PC-3 (cell line): ENCODE measurements at regions of chr15 and their contacts with region 1.

Region 1: GRCh38 chr15:41944313-41944940 is 27.9 kb downstream of the EHD4 start:
- DNase-seq: peak; percentile 97
- ATAC-seq: peak; percentile 76
- H3K4me3 ChIP-seq: peak overlapping the region; percentile 17; the same call in 1 of the 2 replicates
- H3K27ac ChIP-seq: peak overlapping the region; percentile 85
- H3K4me1 ChIP-seq: peaks cover 58% of the 10 kb centered on the region
- H3K27me3 ChIP-seq: no peaks in the 10 kb centered on the region
- CTCF ChIP-seq: no peak

Region 2: GRCh38 chr15:41930221-41930866 is 14.1 kb before region 1 on chr15:
- CTCF ChIA-PET with region 1: no interaction called
- POLR2A ChIA-PET with region 1: interaction called, 7 read pairs
- intact Hi-C with region 1: loop called (anchors 1 kb)
- DNase-seq: peak; percentile 98
- ATAC-seq: peak; percentile 47
- H3K4me3 ChIP-seq: no peak overlapping the region; the same call in 1 of the 2 replicates
- H3K27ac ChIP-seq: peak overlapping the region; percentile 97
- H3K4me1 ChIP-seq: peaks cover 93% of the 10 kb centered on the region
- H3K27me3 ChIP-seq: no peaks in the 10 kb centered on the region
- CTCF ChIP-seq: no peak; the same call in 1 of the 2 replicates

Region 3: DNA sequence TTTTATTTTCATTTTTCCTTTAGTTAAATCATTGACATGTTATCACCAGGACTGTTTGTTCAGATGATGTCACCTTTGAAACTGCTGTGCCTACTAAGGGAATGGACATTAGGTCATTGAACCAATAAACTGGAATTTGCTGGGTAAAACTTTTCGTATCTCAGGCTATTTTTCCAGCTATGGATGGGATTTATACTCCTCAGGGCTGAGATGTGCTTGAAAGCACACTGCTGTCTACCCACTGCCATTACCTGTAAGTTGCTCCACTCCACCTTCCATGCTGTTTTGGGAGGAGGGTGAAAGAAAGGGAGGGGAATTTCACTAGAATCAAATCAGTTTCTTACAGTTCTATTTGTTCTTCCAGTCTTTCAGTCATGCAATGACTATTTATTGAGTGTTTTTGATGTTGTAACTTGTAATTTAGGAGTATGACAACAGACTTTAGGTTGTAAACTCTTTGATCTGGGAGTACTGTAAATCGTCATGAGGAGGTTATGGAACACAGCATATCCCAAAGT is 16.6 kb after region 1 on chr15:
- CTCF ChIA-PET with region 1: interaction called, 3 read pairs
- POLR2A ChIA-PET with region 1: no interaction called
- intact Hi-C with region 1: loop called (anchors 1 kb)
- DNase-seq: peak; percentile 48
- ATAC-seq: peak; percentile 72
- H3K4me3 ChIP-seq: 0 out of 2 replicates have a peak overlapping the region, but pooled peaks have one; percentile 1
- H3K27ac ChIP-seq: peak overlapping the region; percentile 57
- H3K4me1 ChIP-seq: peaks cover 24% of the 10 kb centered on the region
- H3K27me3 ChIP-seq: no peaks in the 10 kb centered on the region
- CTCF ChIP-seq: no peak

Region 4: DNA sequence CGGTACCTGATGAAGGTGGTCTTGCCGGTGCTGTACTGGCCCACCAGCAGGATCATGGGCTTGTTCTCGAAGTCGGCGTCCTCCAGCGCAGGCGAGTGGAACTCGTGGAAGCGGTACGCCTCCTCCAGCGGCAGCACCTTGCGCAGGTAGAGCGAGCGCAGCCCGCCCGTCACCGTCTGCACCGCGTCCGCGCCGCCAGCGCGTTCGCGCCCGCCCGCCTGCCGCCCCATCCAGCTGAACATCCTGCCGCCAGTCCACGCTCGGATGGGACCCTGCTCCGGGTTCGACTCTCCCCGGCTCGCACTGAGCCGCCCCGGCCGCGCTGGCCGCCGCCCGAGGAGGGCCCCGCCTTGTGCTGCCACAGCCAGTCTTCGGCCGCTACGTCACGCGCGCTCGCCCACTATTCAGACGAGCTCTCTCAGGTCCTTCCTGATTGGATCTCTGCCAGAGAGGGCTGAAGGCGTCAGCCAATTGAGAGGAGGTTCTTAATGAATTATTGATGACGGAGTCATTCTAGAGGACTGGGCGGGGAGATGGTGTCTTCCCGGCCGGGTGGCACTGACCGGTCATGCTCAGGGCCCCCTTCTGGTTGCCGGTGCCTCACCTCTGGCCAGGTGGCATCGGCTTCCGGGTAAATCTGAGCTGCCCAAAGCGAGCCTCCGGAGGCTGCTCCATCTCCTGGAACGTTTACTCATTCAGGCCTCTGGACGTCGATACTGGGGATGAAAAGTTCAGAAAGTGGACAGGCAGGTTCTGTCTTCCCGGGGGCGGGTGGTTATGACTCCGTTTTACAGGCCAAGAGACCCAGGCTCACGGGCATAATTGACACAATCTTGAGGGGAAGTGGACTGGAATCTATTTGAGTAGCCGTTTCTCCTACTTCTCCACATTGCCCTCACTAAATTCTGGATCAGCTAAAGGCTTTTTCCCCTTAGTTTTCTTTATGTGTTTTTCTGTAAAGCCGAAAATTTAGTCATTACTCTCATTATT is 28.1 kb after region 1 on chr15 and contains the start of gene EHD4:
- CTCF ChIA-PET with region 1: no interaction called
- POLR2A ChIA-PET with region 1: interaction called, 8 read pairs
- intact Hi-C with region 1: loop called (anchors 1 kb)
- DNase-seq: peak; percentile 100
- ATAC-seq: peak; percentile 90
- H3K4me3 ChIP-seq: peak within 1 kb of the TSS; percentile 87
- H3K27ac ChIP-seq: peak within 1 kb of the TSS; percentile 79
- H3K4me1 ChIP-seq: peaks cover 30% of the 10 kb centered on the region
- H3K27me3 ChIP-seq: no peaks in the 10 kb centered on the region
- CTCF ChIP-seq: peak; percentile 61
- total RNA-seq, gene EHD4: 57.8 and 66.9 TPM in 2 replicates

Region 5: DNA sequence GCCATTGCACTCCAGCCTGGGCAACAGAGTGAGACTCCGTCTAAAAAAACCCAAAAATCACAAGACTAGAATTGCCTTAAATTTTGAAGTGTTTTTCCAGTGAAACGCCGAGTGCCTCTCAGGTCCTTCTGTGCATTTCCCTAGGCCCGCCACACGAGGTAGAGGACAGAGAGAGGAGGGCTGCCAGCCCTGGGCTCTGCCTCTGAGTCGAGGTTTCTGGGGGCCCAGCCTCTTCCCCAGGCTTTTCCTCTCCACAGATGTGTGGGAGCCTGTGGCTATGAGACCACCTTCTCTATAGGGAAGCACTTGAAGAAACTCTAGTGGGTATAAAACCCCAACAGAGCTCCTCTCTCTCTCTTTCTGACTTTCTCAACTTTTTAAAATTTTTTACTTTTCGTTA is 38.8 kb after region 1 on chr15:
- CTCF ChIA-PET with region 1: no interaction called
- POLR2A ChIA-PET with region 1: no interaction called
- intact Hi-C with region 1: no loop called
- DNase-seq: no peak
- ATAC-seq: no peak
- H3K4me3 ChIP-seq: no peak overlapping the region
- H3K27ac ChIP-seq: no peak overlapping the region
- H3K4me1 ChIP-seq: peaks cover 16% of the 10 kb centered on the region; the same call in 1 of the 2 replicates
- H3K27me3 ChIP-seq: no peaks in the 10 kb centered on the region
- CTCF ChIP-seq: no peak

Region 6: GRCh38 chr15:42084460-42085235 is 140.2 kb after region 1 on chr15:
- CTCF ChIA-PET with region 1: no interaction called
- POLR2A ChIA-PET with region 1: no interaction called
- intact Hi-C with region 1: no loop called
- DNase-seq: peak; percentile 95
- ATAC-seq: peak; percentile 91
- H3K4me3 ChIP-seq: peak overlapping the region; percentile 46
- H3K27ac ChIP-seq: peak overlapping the region; percentile 89
- H3K4me1 ChIP-seq: peaks cover 32% of the 10 kb centered on the region
- H3K27me3 ChIP-seq: no peaks in the 10 kb centered on the region
- CTCF ChIP-seq: peak; percentile 95